GM10248 (cell line): ENCODE measurements at regions of chr6 and their contacts with region 1.

Region 1: GRCh38 chr6:159633196-159633595 is 59.8 kb downstream of the SOD2 start:
- DNase-seq: no peak
- CTCF ChIP-seq: peak; percentile 21

Region 2: DNA sequence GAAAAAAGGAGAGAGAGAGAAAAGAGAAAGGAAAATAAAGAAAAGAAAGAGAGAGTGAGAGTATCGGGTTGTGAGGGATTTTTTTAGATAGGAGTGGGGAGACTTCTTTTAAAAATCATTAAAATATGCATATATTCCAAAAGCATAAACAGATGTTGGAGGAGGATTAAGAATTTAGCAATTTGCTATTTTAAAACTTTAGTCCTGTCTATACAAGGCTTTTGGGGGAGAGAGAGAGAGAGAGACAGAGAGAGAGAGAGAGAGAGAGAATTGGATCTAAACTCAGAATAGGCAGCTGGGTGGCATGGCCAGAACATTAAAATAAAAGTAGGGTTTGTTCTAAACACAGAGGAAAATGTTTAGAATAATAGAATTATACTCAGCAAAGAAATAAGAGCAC is 12.2 kb before region 1 on chr6:
- CTCF ChIA-PET with region 1: interaction called, 12 read pairs
- POLR2A ChIA-PET with region 1: no interaction called
- DNase-seq: no peak
- CTCF ChIP-seq: no peak